ENCODE measurements at regions of chr10 and their contacts with region 1.

Region 1: DNA sequence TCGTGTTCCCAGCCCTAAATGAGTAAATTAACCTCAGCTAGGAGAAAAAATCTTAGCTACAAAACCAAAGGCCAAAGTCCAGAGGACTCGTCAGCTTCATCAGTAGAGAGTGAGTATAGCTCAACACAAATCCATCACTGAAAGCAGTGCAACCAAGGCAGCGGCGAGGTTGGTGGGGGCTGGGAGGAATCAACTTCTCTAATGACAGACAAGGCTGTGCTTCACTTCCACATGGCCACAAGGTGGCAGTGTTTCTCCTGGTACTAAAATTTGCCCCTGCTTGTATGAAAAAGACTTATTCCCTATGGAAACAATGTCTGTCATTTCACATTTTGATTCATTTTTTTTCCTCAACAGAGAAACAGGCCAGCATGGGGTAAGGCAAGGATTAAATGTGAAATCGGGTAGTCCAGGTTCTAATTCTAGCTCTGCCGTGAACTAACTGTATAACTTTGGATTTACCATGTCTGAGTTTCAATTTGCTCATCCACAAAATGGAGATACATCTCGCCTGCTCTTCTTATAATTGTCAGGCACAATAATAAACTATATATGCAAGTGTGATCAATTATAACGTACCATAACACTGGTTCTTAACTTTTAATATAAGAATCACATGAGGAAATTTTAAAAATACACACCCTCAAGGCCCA is 39.3 kb downstream of the FAS start:
- DNase-seq: peak; percentile 84
- ATAC-seq: peak; percentile 55
- H3K4me3 Mint-ChIP-seq: no peak overlapping the region
- H3K27ac Mint-ChIP-seq: no peak overlapping the region
- H3K4me1 Mint-ChIP-seq: peaks cover 40% of the 10 kb centered on the region
- H3K27me3 Mint-ChIP-seq: no peaks in the 10 kb centered on the region
- CTCF ChIP-seq: peak; percentile 94

Region 2: DNA sequence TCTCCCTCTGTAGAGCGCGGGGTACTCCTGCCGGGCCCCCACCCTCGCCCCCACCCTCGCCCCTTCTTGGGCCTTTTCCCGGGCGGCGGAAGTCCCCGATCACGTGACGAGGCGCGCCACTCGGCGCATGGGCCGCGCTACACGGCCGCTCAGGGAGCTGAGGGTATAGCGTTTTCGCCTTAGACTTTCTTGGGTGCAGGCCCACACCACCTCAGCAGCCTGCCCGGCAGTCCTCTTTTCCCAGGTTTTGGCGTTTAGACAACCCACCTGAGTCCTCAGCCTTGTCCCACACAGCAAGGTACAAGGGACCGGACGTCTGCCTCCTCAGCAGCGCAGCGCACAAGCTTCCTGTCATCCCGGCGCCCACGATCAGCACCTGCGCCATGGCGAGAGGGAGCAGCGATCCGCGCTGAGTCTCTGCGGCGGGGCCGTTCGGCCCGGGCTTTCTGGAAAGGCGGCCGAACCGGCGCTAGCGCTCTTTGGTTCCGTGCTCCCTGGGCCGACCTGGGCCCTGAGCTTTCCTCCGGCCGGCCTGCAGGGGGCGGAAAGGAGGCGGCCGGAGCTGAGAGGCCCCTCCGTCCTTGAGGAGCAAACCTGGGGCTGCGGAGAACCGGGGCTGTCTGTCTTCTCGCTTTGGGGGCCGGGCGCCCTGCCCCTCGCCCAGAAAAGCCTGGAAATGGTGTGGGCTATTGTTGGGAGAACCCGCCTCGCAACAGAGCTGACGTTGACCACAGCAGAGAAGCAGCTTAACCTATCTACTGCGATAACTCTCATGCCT is 446.9 kb before region 1 on chr10 and contains the start of gene RNLS:
- CTCF ChIA-PET with region 1: no interaction called
- POLR2A ChIA-PET with region 1: no interaction called
- intact Hi-C with region 1: no loop called
- DNase-seq: peak; percentile 74
- ATAC-seq: peak; percentile 90
- H3K4me3 Mint-ChIP-seq: peak within 1 kb of the TSS; percentile 81
- H3K27ac Mint-ChIP-seq: peak within 1 kb of the TSS; percentile 90
- H3K4me1 Mint-ChIP-seq: peaks cover 11% of the 10 kb centered on the region
- H3K27me3 Mint-ChIP-seq: no peaks in the 10 kb centered on the region
- CTCF ChIP-seq: peak; percentile 80
- total RNA-seq, gene RNLS: 4.5 TPM

Region 3: DNA sequence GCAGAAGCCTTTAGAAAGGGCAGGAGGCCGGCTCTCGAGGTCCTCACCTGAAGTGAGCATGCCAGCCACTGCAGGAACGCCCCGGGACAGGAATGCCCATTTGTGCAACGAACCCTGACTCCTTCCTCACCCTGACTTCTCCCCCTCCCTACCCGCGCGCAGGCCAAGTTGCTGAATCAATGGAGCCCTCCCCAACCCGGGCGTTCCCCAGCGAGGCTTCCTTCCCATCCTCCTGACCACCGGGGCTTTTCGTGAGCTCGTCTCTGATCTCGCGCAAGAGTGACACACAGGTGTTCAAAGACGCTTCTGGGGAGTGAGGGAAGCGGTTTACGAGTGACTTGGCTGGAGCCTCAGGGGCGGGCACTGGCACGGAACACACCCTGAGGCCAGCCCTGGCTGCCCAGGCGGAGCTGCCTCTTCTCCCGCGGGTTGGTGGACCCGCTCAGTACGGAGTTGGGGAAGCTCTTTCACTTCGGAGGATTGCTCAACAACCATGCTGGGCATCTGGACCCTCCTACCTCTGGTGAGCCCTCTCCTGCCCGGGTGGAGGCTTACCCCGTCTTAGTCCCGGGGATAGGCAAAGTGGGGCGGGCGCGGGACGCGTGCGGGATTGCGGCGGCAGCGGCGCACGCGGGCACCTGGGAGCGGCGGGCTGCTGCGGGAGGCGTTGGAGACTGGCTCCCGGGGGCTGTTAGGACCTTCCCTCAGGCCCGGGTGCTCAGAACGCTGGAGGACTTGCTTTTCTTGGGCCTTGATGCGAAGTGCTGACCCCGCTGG is 39.3 kb before region 1 on chr10 and contains the start of gene FAS:
- CTCF ChIA-PET with region 1: interaction called, 14 read pairs
- POLR2A ChIA-PET with region 1: interaction called, 3 read pairs
- intact Hi-C with region 1: no loop called
- DNase-seq: peak; percentile 91
- ATAC-seq: peak; percentile 79
- H3K4me3 Mint-ChIP-seq: peak within 1 kb of the TSS; percentile 86
- H3K27ac Mint-ChIP-seq: peak within 1 kb of the TSS; percentile 96
- H3K4me1 Mint-ChIP-seq: peaks cover 54% of the 10 kb centered on the region
- H3K27me3 Mint-ChIP-seq: no peaks in the 10 kb centered on the region
- CTCF ChIP-seq: no peak
- total RNA-seq, gene FAS: 48.6 to 49.0 TPM

Region 4: DNA sequence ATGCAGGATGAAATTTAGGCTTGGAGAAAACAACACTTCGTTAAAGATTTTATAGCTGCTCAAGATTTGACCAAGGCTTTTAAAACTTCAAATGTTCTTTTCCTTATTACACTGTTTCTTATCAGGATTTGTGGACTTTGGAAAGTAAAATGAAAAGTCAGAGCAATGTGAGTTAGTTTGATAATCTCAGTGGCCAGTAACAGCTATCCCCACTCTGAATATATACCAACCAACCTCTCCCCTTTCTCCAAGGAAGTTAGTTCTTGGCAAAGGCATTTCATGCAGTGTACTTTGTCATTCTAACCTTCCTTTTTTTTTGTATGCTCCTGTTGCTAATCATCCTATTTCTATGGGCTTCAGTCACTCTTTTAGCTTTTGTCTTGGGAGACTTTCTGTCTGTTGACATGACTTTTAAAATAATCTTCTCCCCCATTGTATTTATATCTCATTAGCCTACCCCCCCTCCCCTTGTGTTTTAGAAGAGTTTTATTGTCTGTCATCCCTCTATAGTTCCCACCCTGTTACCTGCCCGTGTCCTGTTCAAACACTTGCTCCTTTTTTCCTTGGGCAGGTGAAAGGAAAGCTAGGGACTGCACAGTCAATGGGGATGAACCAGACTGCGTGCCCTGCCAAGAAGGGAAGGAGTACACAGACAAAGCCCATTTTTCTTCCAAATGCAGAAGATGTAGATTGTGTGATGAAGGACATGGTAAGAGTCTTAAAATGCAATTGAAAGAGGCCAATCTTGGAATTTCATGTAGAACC is 22.6 kb before region 1 on chr10:
- CTCF ChIA-PET with region 1: interaction called, 24 read pairs
- POLR2A ChIA-PET with region 1: no interaction called
- intact Hi-C with region 1: no loop called
- DNase-seq: no peak
- ATAC-seq: no peak
- H3K4me3 Mint-ChIP-seq: no peak overlapping the region
- H3K27ac Mint-ChIP-seq: no peak overlapping the region
- H3K4me1 Mint-ChIP-seq: peaks cover 16% of the 10 kb centered on the region
- H3K27me3 Mint-ChIP-seq: no peaks in the 10 kb centered on the region
- CTCF ChIP-seq: no peak

Region 5: GRCh38 chr10:89069589-89069988 is 39.7 kb after region 1 on chr10:
- CTCF ChIA-PET with region 1: interaction called, 19 read pairs
- POLR2A ChIA-PET with region 1: no interaction called
- intact Hi-C with region 1: no loop called
- DNase-seq: no peak
- ATAC-seq: no peak
- H3K4me3 Mint-ChIP-seq: no peak overlapping the region
- H3K27ac Mint-ChIP-seq: no peak overlapping the region
- H3K4me1 Mint-ChIP-seq: no peaks in the 10 kb centered on the region
- H3K27me3 Mint-ChIP-seq: peaks cover 19% of the 10 kb centered on the region
- CTCF ChIP-seq: no peak

Region 6: DNA sequence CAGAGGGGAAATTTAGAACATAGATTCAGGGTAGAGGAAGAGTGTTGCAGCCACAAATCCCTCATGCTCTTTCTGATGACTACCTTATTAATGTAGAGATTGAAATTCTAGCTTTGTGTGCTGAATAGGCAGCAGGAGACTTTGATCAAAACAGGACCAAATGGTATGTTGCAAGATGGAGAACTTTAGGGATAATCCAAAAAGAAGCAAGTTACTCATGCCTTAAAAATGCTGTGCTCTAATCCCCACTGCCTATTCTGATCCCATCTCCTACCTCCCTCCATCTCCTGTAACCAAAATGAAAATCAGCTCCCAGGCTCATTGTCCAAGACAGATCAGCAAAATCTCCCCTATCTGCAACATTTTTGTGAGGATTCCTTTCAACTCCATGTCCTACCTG is 145.9 kb after region 1 on chr10:
- CTCF ChIA-PET with region 1: interaction called, 10 read pairs
- POLR2A ChIA-PET with region 1: no interaction called
- intact Hi-C with region 1: no loop called
- DNase-seq: no peak
- ATAC-seq: no peak
- H3K4me3 Mint-ChIP-seq: no peak overlapping the region
- H3K27ac Mint-ChIP-seq: no peak overlapping the region
- H3K4me1 Mint-ChIP-seq: peaks cover 2% of the 10 kb centered on the region
- H3K27me3 Mint-ChIP-seq: peaks cover 21% of the 10 kb centered on the region
- CTCF ChIP-seq: no peak